A673 (cell line): ENCODE measurements at regions of chr18 and their contacts with region 1.

Region 1: DNA sequence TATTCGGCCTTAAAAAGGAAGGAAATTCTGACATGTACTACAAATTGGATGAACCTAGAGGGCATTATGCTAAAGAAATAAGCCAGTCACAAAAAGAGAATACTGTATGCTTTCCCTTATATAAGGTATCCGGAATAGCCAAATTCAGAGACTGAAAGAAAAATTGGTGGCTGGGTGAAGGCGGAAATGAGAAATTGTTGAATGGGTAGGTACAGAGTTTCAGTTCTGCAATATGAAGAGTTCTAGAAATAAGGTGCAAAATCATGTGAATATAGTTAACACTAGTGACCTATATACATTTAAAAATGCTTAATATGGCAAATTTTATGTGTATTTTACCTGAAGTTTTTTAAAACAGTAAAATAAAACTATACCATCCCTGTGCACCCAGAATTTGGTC is 43.1 kb downstream of the RMP24 start:
- DNase-seq: no peak
- H3K4me3 ChIP-seq: no peak overlapping the region
- H3K27ac ChIP-seq: no peak overlapping the region
- H3K4me1 ChIP-seq: peaks cover 5% of the 10 kb centered on the region
- H3K27me3 ChIP-seq: no peaks in the 10 kb centered on the region
- CTCF ChIP-seq: no peak

Region 2: DNA sequence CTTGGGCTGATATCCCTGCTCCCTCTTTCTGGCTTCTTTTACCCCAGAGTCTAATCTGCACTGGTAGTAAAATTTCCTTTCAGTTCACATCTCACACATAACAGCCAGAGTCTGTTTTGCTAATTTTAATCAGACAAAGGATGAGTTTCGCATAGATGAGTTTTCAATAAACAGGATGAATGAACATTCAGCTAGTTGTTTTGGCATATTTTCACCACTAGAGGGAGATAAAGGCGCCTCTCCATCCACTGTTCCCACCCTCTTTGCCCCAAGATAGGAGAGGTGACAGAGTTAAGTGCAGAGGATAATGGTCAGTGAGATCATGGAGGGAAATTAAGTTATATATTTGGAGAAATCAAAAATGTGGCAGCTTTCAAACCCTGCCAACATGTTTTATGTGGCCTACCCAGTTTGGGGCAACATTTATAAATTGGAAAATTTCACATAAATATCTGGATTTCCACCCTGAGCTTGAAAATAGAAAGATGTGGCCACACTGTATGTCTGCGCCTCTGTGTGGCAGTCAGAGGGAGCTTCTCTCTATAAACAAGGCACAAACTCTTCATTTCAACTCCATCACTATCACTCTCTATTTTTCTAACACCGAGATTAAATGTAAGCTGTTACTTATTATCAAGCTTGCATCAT is 1354.0 kb before region 1 on chr18:
- CTCF ChIA-PET with region 1: no interaction called
- POLR2A ChIA-PET with region 1: no interaction called
- intact Hi-C with region 1: no loop called
- DNase-seq: peak; percentile 72
- H3K4me3 ChIP-seq: no peak overlapping the region
- H3K27ac ChIP-seq: no peak overlapping the region
- H3K4me1 ChIP-seq: peaks cover 11% of the 10 kb centered on the region
- H3K27me3 ChIP-seq: no peaks in the 10 kb centered on the region
- CTCF ChIP-seq: peak; percentile 89

Region 3: DNA sequence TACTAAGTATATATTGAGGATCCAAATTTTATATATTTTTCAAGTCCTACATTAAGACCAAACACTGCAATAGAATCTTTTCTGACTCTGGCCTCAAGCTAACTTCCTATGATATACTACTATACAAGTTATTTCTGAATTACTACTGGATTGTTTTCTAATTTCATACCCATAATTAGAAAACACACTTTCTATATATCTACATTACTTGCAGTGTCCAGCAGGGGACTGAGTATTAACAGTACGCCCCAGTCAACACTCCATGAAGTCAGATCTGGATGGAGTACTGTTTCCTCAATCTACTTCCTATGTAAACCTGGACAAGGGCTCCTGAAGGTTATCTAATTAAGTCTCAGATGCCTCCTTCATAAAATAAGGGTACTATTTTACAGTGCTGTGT is 16.7 kb before region 1 on chr18:
- CTCF ChIA-PET with region 1: no interaction called
- POLR2A ChIA-PET with region 1: no interaction called
- intact Hi-C with region 1: no loop called
- DNase-seq: peak; percentile 27
- H3K4me3 ChIP-seq: no peak overlapping the region
- H3K27ac ChIP-seq: no peak overlapping the region
- H3K4me1 ChIP-seq: no peaks in the 10 kb centered on the region
- H3K27me3 ChIP-seq: no peaks in the 10 kb centered on the region
- CTCF ChIP-seq: peak; percentile 49

Region 4: GRCh38 chr18:36284671-36285295 is 269.2 kb after region 1 on chr18:
- CTCF ChIA-PET with region 1: interaction called, 16 read pairs
- POLR2A ChIA-PET with region 1: no interaction called
- intact Hi-C with region 1: loop called (anchors 2 kb)
- DNase-seq: peak; percentile 73
- H3K4me3 ChIP-seq: no peak overlapping the region
- H3K27ac ChIP-seq: no peak overlapping the region
- H3K4me1 ChIP-seq: no peaks in the 10 kb centered on the region
- H3K27me3 ChIP-seq: peaks cover 30% of the 10 kb centered on the region
- CTCF ChIP-seq: peak; percentile 84